ENCODE measurements at regions of chr7 and their contacts with region 1.

Region 1: DNA sequence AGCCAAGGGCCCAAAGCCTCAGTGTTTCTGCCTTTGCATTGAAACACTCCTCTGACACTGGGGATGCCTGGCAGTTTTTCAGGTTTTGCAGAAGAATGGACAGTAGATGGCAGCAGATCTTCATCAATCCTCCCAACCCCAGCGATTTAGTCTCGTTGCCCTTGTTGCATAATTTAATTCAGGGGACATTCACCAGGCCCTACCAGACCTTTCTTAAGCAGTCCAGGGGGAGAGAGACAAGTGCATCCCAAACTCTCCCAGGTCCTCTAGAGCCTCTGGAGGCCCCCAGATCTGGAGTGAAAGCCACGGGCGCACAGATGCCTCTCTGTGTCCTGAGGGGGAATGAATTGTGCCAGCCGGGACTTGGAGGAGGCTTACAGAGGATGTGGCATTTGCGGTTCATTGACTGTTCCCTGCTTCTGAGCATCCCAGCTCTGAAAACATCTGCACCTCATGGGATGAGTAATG is 29.6 kb downstream of the MINDY4 start:
- DNase-seq: peak; percentile 58 to 79
- ATAC-seq: peak; percentile 81 to 91; a peak in 5 of 6 replicates
- H3K4me3 ChIP-seq: no peak overlapping the region
- H3K27ac ChIP-seq: no peak overlapping the region
- H3K4me1 ChIP-seq: peaks cover 19% of the 10 kb centered on the region
- CTCF ChIP-seq: peak; percentile 84
- EP300 ChIP-seq: no peak
- POLR2A ChIP-seq: no peak
- RAD21 ChIP-seq: peak; percentile 87 to 90

Region 2: DNA sequence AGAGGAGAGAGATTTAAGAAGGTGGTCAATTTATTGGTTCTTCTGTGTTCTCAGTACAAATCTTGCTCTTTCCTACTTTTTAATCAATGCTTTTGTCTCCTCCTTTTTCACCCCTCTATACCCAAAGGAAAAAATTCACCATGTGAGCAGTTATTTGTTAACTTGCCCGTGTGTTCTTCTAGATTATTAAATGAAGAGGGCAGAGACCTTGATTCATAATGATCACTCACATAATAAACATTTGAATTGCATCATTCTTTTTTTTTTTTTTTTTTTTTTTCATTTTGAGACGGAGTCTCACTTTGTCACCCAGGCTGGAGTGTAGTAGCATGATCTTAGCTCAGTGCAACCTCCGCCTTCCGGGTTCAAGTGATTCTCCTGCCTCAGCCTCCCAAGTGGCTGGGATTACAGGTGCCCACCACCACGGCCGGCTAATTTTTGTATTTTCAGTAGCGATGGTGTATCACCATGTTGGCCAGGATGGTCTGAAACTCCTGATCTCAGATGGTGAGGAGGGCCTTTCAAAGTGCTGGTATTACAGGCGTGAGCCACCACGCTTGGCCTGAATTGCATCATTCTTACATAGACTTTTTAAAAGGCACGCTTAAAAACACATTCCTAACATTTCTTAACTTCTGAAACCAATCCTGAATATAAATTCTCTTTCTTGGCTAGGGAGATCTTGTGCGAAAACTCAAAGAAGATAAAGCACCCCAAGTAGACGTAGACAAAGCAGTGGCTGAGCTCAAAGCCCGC is 202.5 kb before region 1 on chr7:
- CTCF ChIA-PET with region 1: no interaction called
- POLR2A ChIA-PET with region 1: no interaction called
- DNase-seq: no peak
- ATAC-seq: no peak
- H3K4me3 ChIP-seq: 0 out of 3 replicates have a peak overlapping the region, but pooled peaks have one; percentile 2
- H3K27ac ChIP-seq: peak overlapping the region in 1 of 2 experiments; percentile 22; a peak in 1 of 6 replicates
- H3K4me1 ChIP-seq: peaks cover 20% of the 10 kb centered on the region; the same call in 2 of the 3 replicates
- CTCF ChIP-seq: no peak
- EP300 ChIP-seq: no peak
- POLR2A ChIP-seq: no peak
- RAD21 ChIP-seq: no peak

Region 3: GRCh38 chr7:30731619-30732018 is 69.2 kb before region 1 on chr7:
- CTCF ChIA-PET with region 1: no interaction called
- POLR2A ChIA-PET with region 1: no interaction called
- DNase-seq: no peak
- ATAC-seq: no peak
- H3K4me3 ChIP-seq: no peak overlapping the region
- H3K27ac ChIP-seq: no peak overlapping the region
- H3K4me1 ChIP-seq: peaks cover 5% of the 10 kb centered on the region; the same call in 2 of the 3 replicates
- CTCF ChIP-seq: no peak
- EP300 ChIP-seq: no peak
- POLR2A ChIP-seq: no peak
- RAD21 ChIP-seq: no peak

Region 4: DNA sequence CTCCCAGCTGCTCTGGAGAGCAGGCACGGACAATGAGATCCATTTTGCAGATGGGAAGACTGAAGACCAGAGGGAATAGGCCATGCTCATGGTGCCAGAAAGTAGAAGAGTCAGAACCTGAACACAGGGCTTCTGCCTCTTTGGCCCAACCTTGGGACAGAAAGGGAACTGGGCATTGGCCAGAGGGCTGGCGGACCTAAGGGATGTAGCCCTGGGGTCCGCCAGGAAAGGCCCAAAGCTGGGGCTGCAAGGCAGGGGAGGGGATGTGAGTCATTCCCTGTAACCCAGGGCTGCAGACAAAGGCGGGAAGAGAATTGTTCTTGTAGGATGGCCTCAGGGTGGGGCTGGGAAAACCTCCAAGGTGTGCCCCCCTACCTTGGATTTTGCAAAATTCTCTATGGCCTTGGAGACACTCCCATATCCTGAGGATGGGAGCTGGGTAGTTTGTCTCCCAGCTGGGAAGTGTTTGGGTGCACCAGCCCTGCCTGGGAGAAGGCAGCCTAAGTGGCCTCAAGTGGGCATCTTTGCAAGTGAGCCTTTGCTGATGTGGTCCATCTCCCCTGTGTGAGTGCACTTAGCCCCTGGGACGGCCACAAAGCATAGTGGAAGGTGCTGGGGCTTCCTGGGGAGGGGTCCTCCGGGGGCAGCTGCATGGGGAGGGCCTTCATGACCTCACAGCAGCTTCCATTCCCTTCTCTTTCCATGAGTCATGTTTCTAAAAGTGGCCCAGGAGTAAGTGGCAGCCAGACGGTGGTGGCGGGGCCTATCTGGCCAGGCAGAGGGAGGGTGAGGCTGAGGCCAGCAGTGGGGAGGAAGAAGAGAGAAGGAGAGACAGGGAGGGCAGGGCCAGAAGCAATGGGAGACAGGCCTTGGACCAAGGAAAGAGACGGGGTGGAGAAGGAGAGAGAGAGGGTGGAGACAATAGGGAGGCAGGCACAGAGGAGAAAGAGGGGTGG is 120.0 kb after region 1 on chr7:
- CTCF ChIA-PET with region 1: no interaction called
- POLR2A ChIA-PET with region 1: no interaction called
- DNase-seq: peak in 1 of 2 experiments; percentile 27
- ATAC-seq: peak in 1 of 2 experiments; percentile 56; a peak in 3 of 6 replicates
- H3K4me3 ChIP-seq: no peak overlapping the region
- H3K27ac ChIP-seq: no peak overlapping the region
- H3K4me1 ChIP-seq: peaks cover 12% of the 10 kb centered on the region; the same call in 2 of the 3 replicates
- CTCF ChIP-seq: no peak
- EP300 ChIP-seq: no peak
- POLR2A ChIP-seq: no peak
- RAD21 ChIP-seq: no peak

Region 5: DNA sequence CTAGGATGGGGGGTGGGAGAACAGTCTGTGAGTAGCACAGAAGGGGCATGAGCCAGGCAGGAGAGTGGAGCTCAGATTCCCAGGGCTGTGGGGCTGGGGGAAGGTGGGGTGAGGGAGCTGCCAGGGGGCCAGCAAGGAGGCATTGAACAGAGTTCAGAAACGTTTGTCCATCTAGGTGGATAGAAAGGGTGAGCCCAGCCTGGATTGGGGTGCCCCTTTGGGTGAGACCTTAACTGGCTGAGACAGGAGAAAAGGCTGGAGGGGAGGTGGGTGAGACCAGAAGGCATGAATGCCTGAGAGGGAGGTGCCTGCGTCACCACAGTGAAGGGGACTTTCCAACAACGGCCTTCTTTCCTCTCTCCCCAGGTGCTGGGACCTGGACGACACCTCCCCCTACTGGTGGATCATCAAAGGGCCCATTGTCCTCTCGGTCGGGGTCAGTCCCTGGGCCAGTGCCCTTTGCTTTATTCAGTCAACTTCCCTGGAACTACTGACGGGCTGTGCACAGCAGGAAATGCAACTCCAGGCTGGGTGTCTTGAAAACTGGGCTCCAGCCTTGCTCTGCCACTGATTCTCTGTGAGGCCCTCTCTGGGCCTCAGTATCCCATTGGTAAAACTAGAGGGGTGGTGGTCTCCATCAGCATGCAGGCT is 173.9 kb after region 1 on chr7:
- CTCF ChIA-PET with region 1: interaction called, 28 read pairs
- POLR2A ChIA-PET with region 1: no interaction called
- DNase-seq: peak; percentile 57 to 72
- ATAC-seq: peak; percentile 67 to 89; a peak in 4 of 6 replicates
- H3K4me3 ChIP-seq: no peak overlapping the region
- H3K27ac ChIP-seq: peak overlapping the region in 1 of 2 experiments; percentile 39; a peak in 1 of 6 replicates
- H3K4me1 ChIP-seq: 0 out of 3 replicates have a peak, but pooled peaks cover 5% of the 10 kb centered on the region
- CTCF ChIP-seq: peak; percentile 43
- EP300 ChIP-seq: no peak
- POLR2A ChIP-seq: no peak
- RAD21 ChIP-seq: peak; percentile 39 to 64; a peak in 4 of 5 replicates